ENCODE measurements at regions of chr5 and their contacts with region 1.

Region 1: GRCh38 chr5:178732281-178732680 is 1.8 kb upstream of the ZNF354A start:
- DNase-seq: no peak
- H3K4me3 ChIP-seq: no peak overlapping the region
- H3K4me3 Mint-ChIP-seq: peak overlapping the region in 2 of 7 donors; percentile 35 to 45
- H3K27ac ChIP-seq: no peak overlapping the region
- H3K27ac Mint-ChIP-seq: peak overlapping the region in 1 of 8 donors; percentile 33
- H3K4me1 ChIP-seq: peaks cover 3% of the 10 kb centered on the region
- H3K4me1 Mint-ChIP-seq: peaks cover 7 to 20% (median 8%) of the 10 kb centered on the region in 3 donors
- H3K27me3 ChIP-seq: no peaks in the 10 kb centered on the region
- H3K27me3 Mint-ChIP-seq: peaks cover 0 to 2% of the 10 kb centered on the region in 2 donors

Region 2: DNA sequence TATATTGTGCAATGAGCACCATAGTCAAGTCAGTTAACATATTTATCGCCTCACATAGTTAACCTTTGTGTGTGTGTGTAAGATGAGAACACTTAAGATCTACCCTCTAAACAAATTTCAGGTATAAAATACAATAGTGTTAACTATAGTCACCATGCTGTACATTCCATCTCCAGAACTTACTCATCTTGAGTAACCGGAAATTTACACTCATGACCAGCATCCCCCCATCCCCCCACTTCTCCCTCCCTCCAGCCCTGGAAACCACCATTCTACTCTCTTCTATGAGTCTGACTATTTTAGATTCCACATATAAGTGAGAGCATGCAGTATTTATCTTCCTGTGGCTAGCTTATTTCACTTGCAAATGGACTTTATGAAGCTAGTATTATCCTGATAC is 42.1 kb before region 1 on chr5:
- CTCF ChIA-PET with region 1: no interaction called
- POLR2A ChIA-PET with region 1: no interaction called
- DNase-seq: no peak
- H3K4me3 ChIP-seq: no peak overlapping the region
- H3K4me3 Mint-ChIP-seq: no peak overlapping the region
- H3K27ac ChIP-seq: no peak overlapping the region
- H3K27ac Mint-ChIP-seq: no peak overlapping the region
- H3K4me1 ChIP-seq: no peaks in the 10 kb centered on the region
- H3K4me1 Mint-ChIP-seq: no peaks in the 10 kb centered on the region
- H3K27me3 ChIP-seq: no peaks in the 10 kb centered on the region
- H3K27me3 Mint-ChIP-seq: peaks cover 10 to 20% of the 10 kb centered on the region in 2 donors

Region 3: DNA sequence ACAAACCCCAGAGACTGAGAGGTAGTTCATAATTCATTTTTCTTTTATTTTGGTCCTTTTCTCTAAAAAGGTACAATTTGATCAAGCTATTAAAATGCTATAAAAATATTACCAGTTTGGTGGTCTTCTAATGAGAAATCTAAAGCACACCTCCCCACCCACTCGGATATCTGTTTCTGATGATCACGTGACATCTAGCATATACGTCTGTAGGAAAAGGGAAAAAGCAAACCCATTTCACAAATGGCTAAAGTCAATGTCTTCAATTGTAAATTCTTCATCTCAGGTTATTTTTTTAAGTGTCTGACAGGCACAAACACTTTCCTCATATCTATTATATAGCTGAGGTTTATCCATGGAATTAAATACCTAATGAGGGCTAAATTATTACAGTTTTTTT is 20.7 kb before region 1 on chr5:
- CTCF ChIA-PET with region 1: no interaction called
- POLR2A ChIA-PET with region 1: no interaction called
- DNase-seq: no peak
- H3K4me3 ChIP-seq: no peak overlapping the region
- H3K4me3 Mint-ChIP-seq: no peak overlapping the region
- H3K27ac ChIP-seq: no peak overlapping the region
- H3K27ac Mint-ChIP-seq: no peak overlapping the region
- H3K4me1 ChIP-seq: no peaks in the 10 kb centered on the region
- H3K4me1 Mint-ChIP-seq: no peaks in the 10 kb centered on the region
- H3K27me3 ChIP-seq: no peaks in the 10 kb centered on the region
- H3K27me3 Mint-ChIP-seq: no peaks in the 10 kb centered on the region

Region 4: GRCh38 chr5:178826216-178826615 is 93.9 kb after region 1 on chr5:
- CTCF ChIA-PET with region 1: no interaction called
- POLR2A ChIA-PET with region 1: no interaction called
- DNase-seq: no peak
- H3K4me3 ChIP-seq: no peak overlapping the region
- H3K4me3 Mint-ChIP-seq: no peak overlapping the region
- H3K27ac ChIP-seq: no peak overlapping the region
- H3K27ac Mint-ChIP-seq: no peak overlapping the region
- H3K4me1 ChIP-seq: no peaks in the 10 kb centered on the region
- H3K4me1 Mint-ChIP-seq: no peaks in the 10 kb centered on the region
- H3K27me3 ChIP-seq: no peaks in the 10 kb centered on the region
- H3K27me3 Mint-ChIP-seq: peaks cover 0 to 6% of the 10 kb centered on the region in 2 donors

Region 5: GRCh38 chr5:178859625-178860531 is 127.6 kb after region 1 on chr5 and contains the start of gene ZNF354B:
- CTCF ChIA-PET with region 1: interaction called, 11 read pairs
- POLR2A ChIA-PET with region 1: interaction called, 13 read pairs
- DNase-seq: peak; percentile 62 to 89 (median 81)
- H3K4me3 ChIP-seq: peak within 1 kb of the TSS; percentile 69
- H3K4me3 Mint-ChIP-seq: peak within 1 kb of the TSS; percentile 81 to 96 (median 91)
- H3K27ac ChIP-seq: peak within 1 kb of the TSS; percentile 31
- H3K27ac Mint-ChIP-seq: peak within 1 kb of the TSS; percentile 16 to 98 (median 89)
- H3K4me1 ChIP-seq: peaks cover 16% of the 10 kb centered on the region
- H3K4me1 Mint-ChIP-seq: peaks cover 28 to 38% (median 35%) of the 10 kb centered on the region in 3 donors
- H3K27me3 ChIP-seq: no peaks in the 10 kb centered on the region
- H3K27me3 Mint-ChIP-seq: peaks cover 2 to 4% of the 10 kb centered on the region in 2 donors
- total RNA-seq, gene ZNF354B: 10.5 to 11.5 TPM

Region 6: DNA sequence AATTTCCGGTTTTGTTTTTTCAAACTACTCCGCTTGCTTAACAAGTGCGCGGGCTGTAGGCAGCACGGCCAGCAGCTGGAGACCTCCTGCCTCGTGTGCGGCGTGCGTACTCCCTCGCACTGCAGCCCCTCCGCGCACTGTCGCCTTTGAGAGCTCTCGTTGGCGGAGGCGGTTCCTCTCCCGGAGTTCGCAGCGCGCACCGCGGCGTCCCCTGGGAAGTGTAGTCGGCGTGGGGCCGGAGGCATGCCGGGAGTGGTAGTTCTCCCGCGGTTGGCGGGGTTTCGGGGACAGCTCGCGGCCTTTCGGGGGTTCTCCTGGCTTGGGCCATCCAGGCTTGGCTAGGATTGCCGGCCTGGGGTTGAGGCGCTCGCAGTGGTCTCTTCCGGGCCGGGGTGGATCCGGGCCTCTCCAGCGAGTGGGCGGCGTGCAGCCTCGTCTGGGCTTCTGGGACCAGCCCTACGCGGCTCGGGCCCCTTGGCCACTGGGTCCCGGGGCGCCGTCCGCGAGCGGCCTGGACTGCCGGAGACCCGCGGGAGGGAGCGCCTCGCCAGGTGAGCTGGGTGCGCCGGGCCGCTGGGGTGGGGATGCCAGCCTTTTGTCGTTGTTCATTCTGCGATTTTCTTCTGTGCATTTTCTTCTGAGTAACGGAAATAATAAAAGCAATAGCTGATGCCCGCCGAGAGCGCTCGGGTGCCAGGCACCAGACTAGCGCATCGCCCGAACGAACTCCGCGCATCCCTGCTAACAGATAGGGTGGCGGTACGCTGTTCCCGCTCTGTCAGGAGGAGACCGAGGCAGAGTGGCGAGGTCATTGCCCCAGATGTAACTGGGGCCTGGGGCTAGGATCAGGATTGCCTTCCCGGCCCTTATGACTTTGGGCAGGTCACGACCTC is 328.1 kb after region 1 on chr5 and contains the start of gene ZNF354C:
- CTCF ChIA-PET with region 1: interaction called, 17 read pairs
- POLR2A ChIA-PET with region 1: interaction called, 6 read pairs
- DNase-seq: peak; percentile 73 to 89 (median 83)
- H3K4me3 ChIP-seq: peak within 1 kb of the TSS; percentile 76
- H3K4me3 Mint-ChIP-seq: peak within 1 kb of the TSS; percentile 91 to 98 (median 97)
- H3K27ac ChIP-seq: peak within 1 kb of the TSS; percentile 45
- H3K27ac Mint-ChIP-seq: peak within 1 kb of the TSS; percentile 62 to 96 (median 91)
- H3K4me1 ChIP-seq: peaks cover 20% of the 10 kb centered on the region
- H3K4me1 Mint-ChIP-seq: peaks cover 32 to 40% (median 37%) of the 10 kb centered on the region in 3 donors
- H3K27me3 ChIP-seq: no peaks in the 10 kb centered on the region
- H3K27me3 Mint-ChIP-seq: peaks cover 4 to 14% of the 10 kb centered on the region in 2 donors
- total RNA-seq, gene ZNF354C: 5.7 to 6.0 TPM

Measured in CD8-positive, alpha-beta memory T cell (primary cell).